Dorsolateral prefrontal cortex (tissue), 120 donors: ENCODE measurements at regions of chrX and their contacts with region 1.

Region 1: DNA sequence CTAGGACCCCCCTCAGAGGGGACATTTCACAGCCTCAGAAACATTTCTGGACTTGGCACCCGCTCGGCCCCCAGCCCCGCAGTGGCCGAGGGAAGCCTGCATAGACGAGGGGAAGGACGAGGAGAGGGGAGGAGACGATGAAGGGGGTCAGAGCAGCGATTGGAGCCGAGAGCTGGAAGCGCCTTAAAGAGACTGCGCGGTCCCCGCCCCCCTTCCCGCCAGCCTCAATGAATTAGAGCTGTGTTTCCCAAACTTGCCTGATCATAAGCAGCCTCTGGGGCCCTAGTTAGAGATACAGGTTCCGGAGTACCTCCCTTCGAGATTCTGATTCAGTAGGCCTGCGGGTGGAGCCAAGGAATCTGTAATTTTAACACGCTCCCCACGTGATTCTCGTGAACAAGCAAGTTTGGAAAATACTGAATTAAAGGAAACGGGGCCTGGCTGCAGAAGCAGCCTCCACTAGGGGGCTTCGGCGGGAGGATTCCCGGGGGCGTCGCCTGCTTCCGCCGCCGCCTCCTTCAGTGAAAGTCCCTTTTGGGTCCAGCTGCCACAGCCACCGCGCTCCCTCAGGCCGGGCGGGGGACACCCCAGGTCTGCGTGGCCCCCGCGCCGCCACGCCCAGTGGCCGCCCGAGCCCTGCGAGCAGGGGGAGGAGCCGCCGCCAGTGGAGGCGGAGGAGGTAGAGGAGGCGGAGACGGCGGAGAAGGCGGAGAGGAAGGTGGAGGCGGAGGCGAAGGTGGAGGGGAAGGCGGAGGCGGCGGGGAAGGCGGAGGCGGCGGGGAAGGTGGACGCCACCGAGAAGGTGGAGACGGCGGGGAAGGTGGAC is at the start of gene USP27X:
- DNase-seq: peak; percentile 55 to 81 (median 74)
- H3K4me3 ChIP-seq: peak within 1 kb of the TSS; percentile 33 to 74 (median 61)
- H3K27ac ChIP-seq: peak within 1 kb of the TSS; percentile 46 to 97 (median 90)
- H3K27me3 ChIP-seq: peaks cover 0 to 67% (median 11%) of the 10 kb centered on the region in 45 donors
- CTCF ChIP-seq: peak in 54 of 56 donors; percentile 7 to 68 (median 46)
- total RNA-seq, gene USP27X: 4.4 to 20.1 (median 12.2) TPM

Region 2: GRCh38 chrX:49840679-49841078 is 38.4 kb before region 1 on chrX:
- intact Hi-C with region 1: loop called (anchors 5 kb)
- DNase-seq: peak; percentile 38 to 83 (median 72)
- H3K4me3 ChIP-seq: no peak overlapping the region
- H3K27ac ChIP-seq: peak overlapping the region in 9 of 59 donors; percentile 11 to 75 (median 30)
- H3K27me3 ChIP-seq: peaks cover 0 to 86% (median 24%) of the 10 kb centered on the region in 45 donors
- CTCF ChIP-seq: peak in 51 of 56 donors; percentile 16 to 63 (median 48)

Region 3: DNA sequence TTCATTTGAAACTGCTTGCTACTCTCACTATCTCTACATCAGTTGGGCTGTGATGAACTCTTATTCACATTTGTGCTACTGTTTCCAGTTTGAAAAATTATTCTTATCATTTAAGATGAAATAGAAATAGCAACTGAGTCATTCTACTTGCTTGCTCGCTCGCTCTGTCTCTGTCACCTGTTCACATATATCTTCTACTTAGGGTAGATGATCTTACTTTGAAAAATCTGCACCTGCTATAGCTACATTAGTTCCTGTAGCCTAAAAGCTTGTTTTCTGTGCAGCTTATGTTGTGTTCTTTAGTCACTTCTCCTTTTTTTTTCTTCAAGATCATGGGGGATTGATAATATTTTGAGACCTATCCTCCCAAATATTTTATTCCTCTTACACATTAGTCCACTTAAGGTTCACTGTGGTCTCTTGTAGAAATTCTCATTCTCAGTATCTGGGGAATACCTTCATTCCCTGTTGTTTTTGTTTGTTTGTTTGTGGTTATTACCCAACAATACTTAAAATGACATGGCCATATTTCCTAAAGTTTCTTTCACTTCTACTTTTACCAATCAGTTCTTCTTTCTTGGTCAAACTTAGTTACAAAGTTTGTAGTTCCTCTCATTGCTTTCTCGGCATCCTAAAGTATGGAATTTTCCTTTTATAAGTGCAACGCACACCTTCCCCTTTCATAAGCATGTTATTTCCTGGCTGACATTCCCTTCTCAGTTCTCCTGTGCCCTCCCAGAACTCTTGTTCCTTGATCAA is 79.9 kb after region 1 on chrX:
- intact Hi-C with region 1: no loop called
- DNase-seq: no peak
- H3K4me3 ChIP-seq: no peak overlapping the region
- H3K27ac ChIP-seq: no peak overlapping the region
- H3K27me3 ChIP-seq: peaks cover 0 to 73% (median 14%) of the 10 kb centered on the region in 45 donors
- CTCF ChIP-seq: no peak